Activated CD4-positive, alpha-beta T cell treated with anti-CD3 and anti-CD28 coated beads, Interleukin-2, amount 10 ng/mL, durations not matched to agents 7 days and 5 days (primary cell): ENCODE measurements at regions of chr5 and their contacts with region 1.

Region 1: GRCh38 chr5:177071666-177072385 is 14.9 kb upstream of the FGFR4 start:
- DNase-seq: peak; percentile 84
- H3K4me3 Mint-ChIP-seq: no peak overlapping the region
- H3K27ac Mint-ChIP-seq: no peak overlapping the region
- H3K4me1 Mint-ChIP-seq: peaks cover 4% of the 10 kb centered on the region
- H3K27me3 Mint-ChIP-seq: no peaks in the 10 kb centered on the region

Region 2: DNA sequence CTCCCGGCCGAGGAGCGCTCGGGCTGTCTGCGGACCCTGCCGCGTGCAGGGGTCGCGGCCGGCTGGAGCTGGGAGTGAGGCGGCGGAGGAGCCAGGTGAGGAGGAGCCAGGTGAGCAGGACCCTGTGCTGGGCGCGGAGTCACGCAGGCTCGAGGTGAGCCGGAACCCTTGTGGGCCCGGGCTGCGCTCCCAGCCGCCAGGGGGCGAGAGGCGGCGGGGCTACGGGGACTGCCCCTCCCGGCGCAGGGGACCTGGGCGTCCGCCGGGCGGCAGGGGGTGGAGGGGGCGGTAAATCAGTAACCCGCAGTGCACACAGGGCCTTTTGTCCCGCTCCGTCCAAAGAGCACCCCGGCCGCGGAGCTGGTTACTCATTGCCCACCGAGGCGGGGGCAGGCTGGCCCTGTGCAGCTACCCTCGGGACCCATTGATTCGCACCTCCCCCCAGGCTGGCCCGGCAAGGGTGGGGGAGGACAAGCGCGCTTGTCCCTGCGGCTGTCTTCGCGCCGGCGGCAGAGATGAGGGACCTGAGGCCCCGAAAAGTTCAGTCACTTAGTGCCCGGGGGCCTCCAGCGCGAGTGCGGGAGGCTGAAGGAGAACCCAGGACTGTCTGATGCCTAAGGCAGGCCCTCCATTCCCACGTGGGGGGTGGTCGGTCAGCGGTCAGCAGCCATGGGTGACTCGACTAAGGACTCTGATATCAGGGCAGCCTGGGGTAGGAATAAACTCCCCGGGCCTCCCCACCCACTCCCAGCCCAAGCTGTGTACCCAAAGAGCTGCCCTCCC is 15.3 kb after region 1 on chr5:
- CTCF ChIA-PET with region 1: interaction called, 17 read pairs
- POLR2A ChIA-PET with region 1: no interaction called
- DNase-seq: peak; percentile 53
- H3K4me3 Mint-ChIP-seq: no peak overlapping the region
- H3K27ac Mint-ChIP-seq: no peak overlapping the region
- H3K4me1 Mint-ChIP-seq: peaks cover 10% of the 10 kb centered on the region
- H3K27me3 Mint-ChIP-seq: peaks cover 36% of the 10 kb centered on the region